ENCODE measurements at regions of chr18 and their contacts with region 1.

Region 1: GRCh38 chr18:30852980-30853379 is 189.6 kb downstream of the DSC3 start:
- DNase-seq: no peak
- ATAC-seq: no peak
- H3K4me3 ChIP-seq: no peak overlapping the region
- H3K4me3 Mint-ChIP-seq: no peak overlapping the region
- H3K27ac ChIP-seq: no peak overlapping the region
- H3K27ac Mint-ChIP-seq: no peak overlapping the region
- H3K4me1 ChIP-seq: no peaks in the 10 kb centered on the region
- H3K4me1 Mint-ChIP-seq: no peaks in the 10 kb centered on the region
- H3K27me3 ChIP-seq: no peaks in the 10 kb centered on the region
- H3K27me3 Mint-ChIP-seq: no peaks in the 10 kb centered on the region

Region 2: DNA sequence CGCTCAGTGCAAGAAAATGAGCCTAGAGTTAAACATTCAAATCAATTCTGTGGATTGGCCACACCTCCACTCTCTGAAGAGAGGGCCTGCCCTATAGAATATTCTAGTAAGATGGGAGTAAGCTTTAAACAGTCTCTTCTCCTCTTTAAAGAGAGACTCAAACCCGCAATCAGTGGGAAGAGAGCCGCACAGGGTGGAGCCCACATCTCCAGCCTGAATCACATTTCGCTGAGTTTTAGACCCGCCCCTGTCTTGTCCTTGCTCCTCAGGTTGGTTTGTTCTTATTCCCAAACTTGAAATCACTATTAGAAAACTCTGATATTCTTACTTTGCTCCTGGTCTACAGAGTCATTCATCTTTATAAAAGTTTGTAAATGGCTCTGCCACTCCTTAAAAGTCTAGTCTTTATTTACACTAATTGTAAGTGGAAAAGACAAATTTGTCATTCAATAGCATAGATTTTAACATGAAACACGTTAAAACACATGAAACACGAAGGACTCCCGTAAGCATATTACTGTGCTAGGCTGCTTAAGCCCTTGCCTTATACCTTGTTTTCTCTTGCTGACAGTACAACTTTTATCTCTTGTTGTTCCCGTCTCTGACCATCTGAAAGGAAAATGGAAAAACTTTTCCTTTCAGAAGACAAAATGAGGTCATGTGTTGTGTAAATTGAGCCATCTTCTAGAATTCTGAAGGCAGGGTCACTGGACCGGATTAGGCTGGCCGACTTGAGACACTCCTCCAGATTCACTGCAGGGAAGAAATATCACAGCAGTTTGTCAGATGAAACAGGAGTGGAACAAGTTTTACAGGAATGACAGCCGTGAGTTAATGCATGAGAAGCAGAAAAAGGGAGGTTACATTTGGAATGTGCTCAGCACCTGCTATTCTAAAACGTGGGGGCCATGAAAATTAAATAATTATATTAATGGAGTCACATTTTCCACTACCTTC is 304.1 kb after region 1 on chr18:
- CTCF ChIA-PET with region 1: no interaction called
- POLR2A ChIA-PET with region 1: no interaction called
- intact Hi-C with region 1: loop called in 1 of 2 experiments (anchors 5 kb)
- DNase-seq: no peak
- ATAC-seq: no peak
- H3K4me3 ChIP-seq: no peak overlapping the region
- H3K4me3 Mint-ChIP-seq: no peak overlapping the region
- H3K27ac ChIP-seq: no peak overlapping the region
- H3K27ac Mint-ChIP-seq: no peak overlapping the region
- H3K4me1 ChIP-seq: no peaks in the 10 kb centered on the region
- H3K4me1 Mint-ChIP-seq: peaks cover 0 to 5% (median 0%) of the 10 kb centered on the region in 7 donors
- H3K27me3 ChIP-seq: no peaks in the 10 kb centered on the region
- H3K27me3 Mint-ChIP-seq: no peaks in the 10 kb centered on the region

Region 3: GRCh38 chr18:31701744-31702143 is 848.8 kb after region 1 on chr18:
- CTCF ChIA-PET with region 1: no interaction called
- POLR2A ChIA-PET with region 1: no interaction called
- intact Hi-C with region 1: no loop called
- DNase-seq: no peak
- ATAC-seq: no peak
- H3K4me3 ChIP-seq: no peak overlapping the region
- H3K4me3 Mint-ChIP-seq: no peak overlapping the region
- H3K27ac ChIP-seq: no peak overlapping the region
- H3K27ac Mint-ChIP-seq: no peak overlapping the region
- H3K4me1 ChIP-seq: peaks cover 0 to 6% of the 10 kb centered on the region in 2 donors
- H3K4me1 Mint-ChIP-seq: peaks cover 4 to 12% (median 8%) of the 10 kb centered on the region in 7 donors
- H3K27me3 ChIP-seq: no peaks in the 10 kb centered on the region
- H3K27me3 Mint-ChIP-seq: peaks cover 0 to 3% (median 0%) of the 10 kb centered on the region in 5 donors

Measured in naive thymus-derived CD4-positive, alpha-beta T cell (primary cell).